Head of caudate nucleus (tissue), 42 donors: ENCODE measurements at regions of chrX and their contacts with region 1.

Region 1: GRCh38 chrX:10119399-10119990 is 37.3 kb upstream of the CLCN4 start:
- DNase-seq: peak; percentile 12 to 88 (median 70)

Region 2: GRCh38 chrX:9885150-9885549 is 234.3 kb before region 1 on chrX:
- intact Hi-C with region 1: loop called (anchors 5 kb)
- DNase-seq: peak; percentile 52 to 88 (median 74)

Region 3: GRCh38 chrX:9988762-9989161 is 130.7 kb before region 1 on chrX:
- intact Hi-C with region 1: loop called (anchors 2 kb)
- DNase-seq: no peak

Region 4: GRCh38 chrX:9995855-9996339 is 123.6 kb before region 1 on chrX:
- intact Hi-C with region 1: loop called (anchors 2 kb)
- DNase-seq: peak; percentile 67 to 95 (median 87)